Tibial artery (tissue), 4 donors: ENCODE measurements at regions of chr3 and their contacts with region 1.

Region 1: DNA sequence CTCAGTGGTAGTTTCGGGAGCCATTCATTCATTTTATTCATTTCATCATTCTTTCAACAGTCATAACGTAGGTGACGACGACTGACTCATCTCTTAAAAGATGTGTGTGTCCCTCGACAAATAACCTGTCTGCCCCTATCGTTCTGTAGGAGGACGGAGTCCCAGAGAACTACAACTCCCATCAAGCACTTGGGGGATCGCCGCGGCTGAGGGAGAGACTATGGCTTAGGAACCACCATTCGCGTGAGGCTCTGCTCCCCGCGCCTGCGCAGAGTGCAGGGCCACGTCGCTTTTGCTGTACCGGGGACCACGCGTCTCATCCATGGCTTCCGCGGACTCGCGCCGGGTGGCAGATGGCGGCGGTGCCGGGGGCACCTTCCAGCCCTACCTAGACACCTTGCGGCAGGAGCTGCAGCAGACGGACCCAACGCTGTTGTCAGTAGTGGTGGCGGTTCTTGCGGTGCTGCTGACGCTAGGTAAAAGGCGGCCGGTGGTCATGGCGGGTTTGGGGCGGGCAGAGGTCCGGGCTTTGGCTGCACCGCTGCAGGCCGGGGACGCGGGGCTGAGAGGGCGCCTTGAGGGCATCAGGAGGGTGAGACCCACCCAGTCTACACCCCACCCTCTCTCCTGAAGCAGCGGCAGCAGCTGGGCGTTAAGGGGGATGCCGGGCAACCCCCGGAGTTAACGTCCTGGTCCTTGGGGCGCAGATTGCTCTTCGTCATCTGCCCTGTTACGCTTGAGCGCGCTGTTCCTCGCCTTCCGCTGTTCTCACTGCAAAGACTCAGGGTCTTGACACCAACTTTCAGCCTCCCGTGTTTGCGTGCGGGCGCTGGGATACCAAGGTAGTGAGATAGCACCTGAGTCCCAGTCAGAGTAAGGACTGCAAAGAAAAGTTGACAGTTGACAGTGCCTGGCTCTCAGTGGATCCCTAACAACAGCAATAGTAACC is at the start of gene SRPRB:
- DNase-seq: peak; percentile 95
- H3K4me3 ChIP-seq: peak within 1 kb of the TSS; percentile 81 to 91
- H3K27ac ChIP-seq: peak within 1 kb of the TSS; percentile 55 to 63
- H3K4me1 ChIP-seq: peaks cover 0 to 11% (median 5%) of the 10 kb centered on the region in 4 donors
- H3K27me3 ChIP-seq: no peaks in the 10 kb centered on the region
- CTCF ChIP-seq: no peak

Region 2: DNA sequence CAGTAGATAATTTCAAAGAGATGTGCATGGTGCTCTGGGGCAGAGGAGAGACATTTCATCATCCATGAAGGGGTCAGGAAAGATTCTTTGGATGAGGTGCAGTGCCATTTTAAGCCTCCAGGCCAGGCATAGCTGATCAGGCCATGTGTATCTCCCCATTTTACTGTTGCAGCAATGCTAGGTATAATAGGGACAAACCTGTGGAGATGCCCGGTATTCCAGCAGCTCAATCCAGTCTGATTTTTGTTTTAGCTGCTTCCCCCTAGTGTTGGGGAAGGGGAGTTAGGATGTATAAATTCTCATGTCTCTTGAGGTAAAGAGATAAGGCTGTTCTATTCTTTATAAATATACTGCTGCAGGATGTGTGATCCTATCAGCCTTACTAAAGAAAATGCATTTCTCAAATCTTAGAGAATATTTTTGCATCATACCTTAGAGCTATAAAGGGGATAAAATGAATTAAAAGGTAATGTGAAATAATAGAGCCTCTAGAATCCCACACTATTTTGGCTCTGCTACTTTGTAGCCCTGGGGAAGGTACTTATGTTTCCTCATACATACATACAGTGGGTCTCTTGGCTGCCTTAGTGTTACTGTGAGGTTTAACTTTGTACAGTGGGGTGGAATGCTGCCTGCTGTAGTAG is 227.1 kb before region 1 on chr3:
- intact Hi-C with region 1: loop called (anchors 5 kb)
- DNase-seq: no peak
- H3K4me3 ChIP-seq: no peak overlapping the region
- H3K27ac ChIP-seq: no peak overlapping the region
- H3K4me1 ChIP-seq: peaks cover 0 to 77% (median 41%) of the 10 kb centered on the region in 4 donors
- H3K27me3 ChIP-seq: no peaks in the 10 kb centered on the region
- CTCF ChIP-seq: peak; percentile 30 to 34

Region 3: DNA sequence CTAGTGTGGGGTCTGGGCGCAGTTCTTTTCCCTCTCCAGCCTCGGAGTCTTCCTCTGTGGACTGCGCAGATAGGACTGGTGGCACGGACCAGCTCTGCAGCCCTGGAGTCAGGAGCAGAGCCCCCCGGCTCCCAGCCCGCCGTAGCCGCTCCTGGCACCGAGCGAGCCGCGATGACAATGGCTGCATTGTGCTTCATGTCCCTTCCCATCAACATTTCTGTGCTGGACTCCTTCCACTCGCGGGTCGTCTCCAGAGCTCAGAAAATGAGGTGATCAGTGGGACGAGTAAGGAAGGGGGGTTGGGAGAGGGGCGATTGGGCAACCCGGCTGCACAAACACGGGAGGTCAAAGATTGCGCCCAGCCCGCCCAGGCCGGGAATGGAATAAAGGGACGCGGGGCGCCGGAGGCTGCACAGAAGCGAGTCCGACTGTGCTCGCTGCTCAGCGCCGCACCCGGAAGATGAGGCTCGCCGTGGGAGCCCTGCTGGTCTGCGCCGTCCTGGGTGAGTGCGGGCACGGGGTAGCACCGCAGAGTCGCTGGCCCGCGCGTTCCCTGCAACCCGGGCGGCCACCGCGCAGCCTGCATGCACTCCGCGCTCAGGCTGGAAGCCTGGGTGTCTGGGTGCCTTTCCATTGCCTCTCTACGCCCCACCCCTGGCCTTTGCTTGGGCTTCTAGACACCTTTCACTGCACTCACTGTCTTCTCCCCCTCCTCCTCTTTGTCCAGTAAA is 59.7 kb before region 1 on chr3 and contains the start of gene TF:
- intact Hi-C with region 1: no loop called
- DNase-seq: no peak
- H3K4me3 ChIP-seq: no peak within 1 kb of the TSS
- H3K27ac ChIP-seq: no peak within 1 kb of the TSS
- H3K4me1 ChIP-seq: no peaks in the 10 kb centered on the region
- H3K27me3 ChIP-seq: peaks cover 0 to 24% of the 10 kb centered on the region in 2 donors
- CTCF ChIP-seq: no peak

Region 4: DNA sequence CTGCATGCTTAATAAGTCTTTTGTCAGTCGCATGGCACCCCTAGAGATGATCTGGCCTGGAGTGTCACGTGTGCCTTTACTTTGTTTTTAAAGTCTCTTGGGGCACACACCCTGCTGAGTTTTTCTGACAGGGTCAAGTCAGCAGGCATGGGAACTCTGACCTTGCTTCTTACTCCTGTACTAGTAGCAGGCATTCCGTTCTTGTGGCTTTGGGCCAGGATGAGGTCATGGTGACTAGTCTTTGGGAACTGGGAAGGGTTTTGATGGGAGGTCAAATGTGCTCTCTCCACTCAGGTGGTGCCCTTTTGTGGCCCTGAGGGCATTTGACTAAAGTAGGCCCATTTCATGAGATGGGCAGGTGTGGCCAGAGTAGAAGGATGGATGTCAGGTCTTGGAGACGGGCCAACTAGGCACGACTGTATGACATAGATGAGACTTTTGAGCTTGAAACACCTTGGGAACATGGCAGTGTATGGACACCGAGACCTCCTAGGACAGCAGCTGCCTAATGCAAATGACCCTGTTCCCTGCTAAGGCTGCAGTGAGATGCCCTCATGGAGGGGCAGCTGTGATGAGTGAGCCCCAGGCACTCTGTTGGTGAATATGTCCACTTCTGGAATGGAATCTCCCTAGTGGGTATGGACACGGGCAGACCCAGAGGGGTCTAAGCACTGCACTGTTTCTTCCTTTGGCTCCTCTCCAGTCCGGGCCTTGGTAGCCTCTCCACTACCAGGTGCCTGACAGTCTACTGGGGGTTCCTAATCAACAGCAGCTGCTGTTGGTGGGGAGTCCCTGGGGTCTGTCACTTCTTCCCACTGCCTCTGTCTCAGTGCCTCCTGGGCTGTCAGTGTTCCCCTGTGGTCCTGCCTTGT is 16.2 kb after region 1 on chr3:
- intact Hi-C with region 1: no loop called
- DNase-seq: peak; percentile 54 to 71
- H3K4me3 ChIP-seq: no peak overlapping the region
- H3K27ac ChIP-seq: no peak overlapping the region
- H3K4me1 ChIP-seq: peaks cover 0 to 6% (median 3%) of the 10 kb centered on the region in 4 donors
- H3K27me3 ChIP-seq: no peaks in the 10 kb centered on the region
- CTCF ChIP-seq: no peak

Region 5: DNA sequence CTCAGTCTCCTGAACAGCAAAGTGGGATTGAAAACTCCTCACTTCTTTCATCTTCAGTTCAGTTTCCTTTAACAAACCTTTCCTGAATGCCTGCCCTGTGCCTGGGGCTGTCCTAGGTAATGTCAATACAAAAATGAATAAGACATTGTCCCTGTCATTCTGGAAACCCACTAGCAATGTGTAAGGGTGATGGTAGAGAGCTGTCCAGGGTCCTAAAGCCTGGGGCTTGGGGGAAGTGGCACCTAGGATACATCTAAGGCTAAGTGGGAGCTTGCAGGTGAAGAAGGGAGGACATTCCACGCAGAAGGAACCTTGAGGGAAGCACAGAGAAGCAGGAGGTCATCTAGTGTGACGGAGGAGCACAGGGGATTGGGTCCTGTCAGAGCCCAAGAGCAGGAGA is 1947.0 kb after region 1 on chr3:
- intact Hi-C with region 1: no loop called
- DNase-seq: no peak
- H3K4me3 ChIP-seq: no peak overlapping the region
- H3K27ac ChIP-seq: no peak overlapping the region
- H3K4me1 ChIP-seq: no peaks in the 10 kb centered on the region
- H3K27me3 ChIP-seq: no peaks in the 10 kb centered on the region
- CTCF ChIP-seq: no peak